Thyroid gland (tissue), 4 donors: ENCODE measurements at regions of chr15 and their contacts with region 1.

Region 1: GRCh38 chr15:50908210-50909009 is at the start of gene AP4E1:
- DNase-seq: peak; percentile 82 to 90
- H3K4me3 ChIP-seq: peak within 1 kb of the TSS; percentile 71 to 84 (median 75)
- H3K27ac ChIP-seq: peak within 1 kb of the TSS; percentile 55 to 90 (median 90)
- H3K4me1 ChIP-seq: peaks cover 12 to 27% of the 10 kb centered on the region in 2 donors
- H3K27me3 ChIP-seq: no peaks in the 10 kb centered on the region
- CTCF ChIP-seq: peak; percentile 92 to 97 (median 97)
- POLR2A ChIP-seq: peak in 1 of 2 donors; percentile 78
- total RNA-seq, gene AP4E1: 9.3 to 13.3 (median 10.4) TPM

Region 2: DNA sequence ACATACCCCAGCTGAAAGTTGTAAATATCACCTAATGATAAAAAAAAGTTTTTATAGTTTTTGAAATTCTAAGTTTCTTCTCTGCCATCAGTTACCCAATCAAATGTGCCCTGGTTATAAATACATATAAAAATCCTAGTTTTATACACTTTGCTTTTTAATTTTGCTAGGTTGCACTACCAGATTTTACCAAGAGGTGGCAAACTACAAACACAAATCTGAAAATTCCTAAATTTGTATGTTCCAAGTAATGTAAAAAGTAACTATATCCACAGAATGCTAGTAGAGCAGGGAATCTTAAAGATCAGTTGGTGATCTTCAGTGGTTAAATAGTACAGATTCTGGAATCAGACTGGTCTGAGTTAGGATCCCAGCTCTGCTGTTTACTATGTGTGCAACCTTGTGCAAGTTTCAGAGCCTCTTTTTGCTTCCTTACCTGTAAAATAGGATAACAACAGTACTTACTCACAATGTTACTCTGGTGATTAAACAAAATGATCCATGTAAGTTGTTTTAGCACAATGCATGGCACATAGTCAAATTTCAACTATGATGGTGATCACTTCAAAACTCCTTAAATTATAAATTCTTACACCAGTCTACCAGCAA is 232.8 kb before region 1 on chr15:
- intact Hi-C with region 1: loop called (anchors 5 kb)
- DNase-seq: no peak
- H3K4me3 ChIP-seq: no peak overlapping the region
- H3K27ac ChIP-seq: no peak overlapping the region
- H3K4me1 ChIP-seq: no peaks in the 10 kb centered on the region
- H3K27me3 ChIP-seq: no peaks in the 10 kb centered on the region
- CTCF ChIP-seq: peak; percentile 43 to 83 (median 74)
- POLR2A ChIP-seq: no peak

Region 3: GRCh38 chr15:50765195-50765973 is 143.0 kb before region 1 on chr15 and contains the start of gene SPPL2A:
- intact Hi-C with region 1: loop called (anchors 10 kb)
- DNase-seq: peak; percentile 80 to 81
- H3K4me3 ChIP-seq: peak within 1 kb of the TSS; percentile 27 to 89 (median 73)
- H3K27ac ChIP-seq: peak within 1 kb of the TSS; percentile 90 to 94 (median 91)
- H3K4me1 ChIP-seq: peaks cover 12% of the 10 kb centered on the region in 2 donors
- H3K27me3 ChIP-seq: no peaks in the 10 kb centered on the region
- CTCF ChIP-seq: no peak
- POLR2A ChIP-seq: peak; percentile 39 to 89
- total RNA-seq, gene SPPL2A: 174 to 468 (median 256) TPM